ENCODE measurements at regions of chr7 and their contacts with region 1.

Region 1: DNA sequence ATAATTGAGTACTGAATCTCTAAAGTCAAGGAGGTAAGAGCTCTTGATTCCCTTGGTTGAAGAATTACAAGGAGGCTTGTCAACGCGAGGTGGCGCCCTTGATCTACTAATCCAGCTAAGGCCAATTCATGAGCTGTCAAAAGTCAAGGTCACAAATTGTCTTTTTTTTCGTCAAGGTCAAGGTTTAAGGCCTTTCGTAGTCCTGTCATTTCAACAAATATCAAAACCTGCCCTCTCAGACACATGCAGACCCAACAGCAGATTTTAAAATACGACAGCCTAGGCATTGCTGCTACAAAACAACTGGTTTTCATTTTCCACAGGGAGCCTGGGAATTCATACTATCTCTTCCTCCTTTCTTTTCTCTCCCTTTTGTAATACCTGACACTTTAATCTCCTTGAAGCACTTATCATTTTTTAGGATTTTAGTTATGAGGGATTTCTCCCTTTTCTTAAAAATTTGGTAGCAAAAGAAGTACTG is 3.6 kb downstream of the HOXA13 start:
- H3K4me3 Mint-ChIP-seq: no peak overlapping the region
- H3K27ac Mint-ChIP-seq: no peak overlapping the region
- H3K4me1 Mint-ChIP-seq: peaks cover 48% of the 10 kb centered on the region
- H3K27me3 Mint-ChIP-seq: peaks cover 81% of the 10 kb centered on the region

Region 2: DNA sequence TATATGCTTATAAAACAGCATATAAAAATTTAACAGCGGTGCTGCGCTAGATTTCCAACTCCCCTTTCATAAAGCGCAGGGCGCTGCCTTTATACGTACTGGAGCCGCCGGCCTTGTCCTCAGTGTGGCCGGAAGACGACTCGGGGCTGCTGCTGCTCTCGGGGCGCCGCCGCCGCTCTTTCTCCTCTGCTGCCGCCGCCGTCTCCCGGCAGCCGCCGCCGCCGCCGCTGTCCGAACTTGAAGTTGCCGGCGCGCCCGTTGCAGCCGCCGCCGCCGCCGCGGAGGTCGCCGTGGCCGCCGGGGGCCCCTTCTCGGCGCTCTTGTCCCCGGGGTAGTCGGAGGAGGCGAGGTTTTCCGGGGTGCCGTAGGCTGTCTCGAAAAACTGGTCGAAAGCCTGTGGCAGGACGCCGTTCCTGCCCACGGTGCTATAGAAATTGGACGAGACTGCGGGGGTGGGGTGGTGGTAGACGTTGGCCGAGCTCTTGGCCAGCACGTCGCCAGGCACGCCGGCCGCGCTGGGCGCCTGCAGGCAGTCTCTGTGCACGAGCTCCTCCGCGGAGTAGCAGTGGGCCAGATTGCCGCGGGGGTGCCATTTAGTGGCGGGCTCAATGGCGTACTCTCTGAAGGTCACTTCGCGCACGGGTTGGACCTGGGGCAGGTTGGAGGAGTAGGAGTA is 11.9 kb before region 1 on chr7:
- intact Hi-C with region 1: no loop called
- H3K4me3 Mint-ChIP-seq: peak overlapping the region; percentile 59
- H3K27ac Mint-ChIP-seq: no peak overlapping the region
- H3K4me1 Mint-ChIP-seq: peaks cover 53% of the 10 kb centered on the region
- H3K27me3 Mint-ChIP-seq: peaks cover 94% of the 10 kb centered on the region

Region 3: DNA sequence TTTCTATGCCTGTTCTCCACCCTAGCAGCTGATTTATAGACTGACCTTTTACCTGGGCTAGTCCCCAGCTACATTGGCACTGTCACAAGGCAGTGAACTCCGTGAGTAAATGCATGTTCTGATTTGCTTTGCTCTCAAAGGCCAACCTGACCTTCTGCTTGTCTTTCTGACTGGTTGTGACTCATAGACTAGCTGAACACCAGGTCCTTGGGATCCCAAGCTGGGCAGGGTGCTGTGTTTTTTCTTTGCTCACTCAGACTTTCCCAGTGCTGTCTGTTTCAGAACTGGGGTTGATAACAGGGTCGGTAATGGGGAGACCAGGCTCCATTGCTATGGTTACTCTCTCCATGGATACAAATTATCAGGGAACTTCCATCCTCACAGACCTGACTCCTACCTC is 81.3 kb after region 1 on chr7:
- intact Hi-C with region 1: no loop called
- H3K4me3 Mint-ChIP-seq: no peak overlapping the region
- H3K27ac Mint-ChIP-seq: no peak overlapping the region
- H3K4me1 Mint-ChIP-seq: peaks cover 5% of the 10 kb centered on the region
- H3K27me3 Mint-ChIP-seq: peaks cover 15% of the 10 kb centered on the region

Region 4: DNA sequence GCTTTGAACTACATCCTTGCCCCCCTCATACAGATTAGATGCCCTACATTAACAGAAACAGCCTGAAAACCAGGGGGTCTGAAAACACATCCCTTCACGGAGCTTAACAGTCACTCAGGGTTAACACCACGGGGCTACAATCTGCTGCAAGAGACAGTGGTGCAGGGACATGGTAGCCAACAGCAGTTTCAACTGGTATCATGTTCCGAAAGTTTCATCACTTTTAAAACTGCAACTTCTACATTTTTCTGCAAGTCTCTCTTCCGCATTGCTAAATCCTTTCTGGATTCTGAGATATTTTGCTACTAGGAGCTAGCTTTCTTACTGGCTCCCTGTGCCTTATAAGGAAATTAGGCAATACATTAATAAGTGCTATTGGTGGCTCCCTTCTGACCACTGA is 891.7 kb after region 1 on chr7:
- intact Hi-C with region 1: loop called (anchors 5 kb)
- H3K4me3 Mint-ChIP-seq: no peak overlapping the region
- H3K27ac Mint-ChIP-seq: peak overlapping the region; percentile 80
- H3K4me1 Mint-ChIP-seq: peaks cover 52% of the 10 kb centered on the region
- H3K27me3 Mint-ChIP-seq: no peaks in the 10 kb centered on the region